CD4-positive, alpha-beta T cell (primary cell): ENCODE measurements at regions of chr9 and their contacts with region 1.

Region 1: GRCh38 chr9:112333639-112334431 is 416 bp upstream of the PTBP3 start:
- DNase-seq: peak; percentile 85 to 98 (median 94)
- ATAC-seq: peak; percentile 80
- H3K4me3 ChIP-seq: peak overlapping the region; percentile 88
- H3K4me3 Mint-ChIP-seq: peak overlapping the region; percentile 90
- H3K27ac ChIP-seq: peak overlapping the region; percentile 91 to 92
- H3K27ac Mint-ChIP-seq: peak overlapping the region; percentile 88
- H3K4me1 ChIP-seq: peaks cover 7% of the 10 kb centered on the region
- H3K4me1 Mint-ChIP-seq: peaks cover 35% of the 10 kb centered on the region
- H3K27me3 ChIP-seq: no peaks in the 10 kb centered on the region
- H3K27me3 Mint-ChIP-seq: no peaks in the 10 kb centered on the region
- CTCF ChIP-seq: peak; percentile 49

Region 2: GRCh38 chr9:111631071-111631971 is 702.5 kb before region 1 on chr9 and contains the start of gene DNAJC25:
- CTCF ChIA-PET with region 1: no interaction called
- POLR2A ChIA-PET with region 1: interaction called, 8 read pairs
- intact Hi-C with region 1: loop called in 1 of 2 experiments (anchors 5 kb)
- DNase-seq: peak; percentile 91 to 100 (median 96)
- ATAC-seq: peak; percentile 92
- H3K4me3 ChIP-seq: peak within 1 kb of the TSS; percentile 74
- H3K4me3 Mint-ChIP-seq: peak within 1 kb of the TSS; percentile 99
- H3K27ac ChIP-seq: peak within 1 kb of the TSS; percentile 3 to 75
- H3K27ac Mint-ChIP-seq: peak within 1 kb of the TSS; percentile 90
- H3K4me1 ChIP-seq: peaks cover 18% of the 10 kb centered on the region
- H3K4me1 Mint-ChIP-seq: peaks cover 58% of the 10 kb centered on the region
- H3K27me3 ChIP-seq: no peaks in the 10 kb centered on the region
- H3K27me3 Mint-ChIP-seq: no peaks in the 10 kb centered on the region
- CTCF ChIP-seq: no peak
- total RNA-seq, gene DNAJC25: 4.5 to 4.8 TPM

Region 3: DNA sequence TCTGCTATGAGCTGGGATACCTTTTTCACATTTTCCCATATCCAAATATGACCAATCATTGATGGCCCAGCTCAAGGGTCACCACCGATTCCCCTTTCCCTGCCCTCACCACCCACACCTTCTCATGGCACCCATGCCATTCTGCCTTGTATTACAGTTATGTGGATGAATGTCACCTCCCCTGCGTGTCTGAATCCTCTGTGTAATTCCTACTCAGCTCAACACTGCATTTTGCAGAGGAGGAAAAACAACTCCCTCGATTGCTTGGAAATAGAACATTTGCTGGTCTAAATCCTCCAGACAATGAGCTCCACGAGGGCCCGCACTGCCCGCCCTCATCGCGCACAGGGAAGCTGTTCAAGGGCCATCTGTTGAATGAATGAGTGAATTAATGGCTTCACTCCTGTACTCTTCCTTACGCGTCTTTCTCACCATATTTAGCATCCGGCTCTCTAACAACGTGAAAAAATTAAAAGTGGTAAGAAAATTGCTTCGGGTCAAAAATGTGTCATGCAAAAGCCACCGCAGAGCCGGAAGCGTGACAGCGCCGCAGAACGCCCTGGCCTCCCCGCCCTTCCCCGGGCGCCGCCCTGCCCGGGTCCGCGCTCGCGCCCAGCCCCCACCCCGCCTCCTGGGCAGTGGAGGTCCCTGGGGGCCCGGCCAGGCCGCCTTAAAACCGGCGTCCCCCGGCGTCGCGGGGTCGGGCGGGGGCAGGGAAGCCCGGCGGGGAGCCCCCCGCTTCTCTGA is 159.4 kb before region 1 on chr9:
- CTCF ChIA-PET with region 1: interaction called, 3 read pairs
- POLR2A ChIA-PET with region 1: interaction called, 33 read pairs
- intact Hi-C with region 1: loop called (anchors 1 to 5 kb)
- DNase-seq: peak; percentile 44 to 92 (median 66)
- ATAC-seq: peak; percentile 66
- H3K4me3 ChIP-seq: peak overlapping the region; percentile 56
- H3K4me3 Mint-ChIP-seq: peak overlapping the region; percentile 89
- H3K27ac ChIP-seq: no peak overlapping the region
- H3K27ac Mint-ChIP-seq: peak overlapping the region; percentile 81
- H3K4me1 ChIP-seq: peaks cover 70% of the 10 kb centered on the region
- H3K4me1 Mint-ChIP-seq: peaks cover 79% of the 10 kb centered on the region
- H3K27me3 ChIP-seq: no peaks in the 10 kb centered on the region
- H3K27me3 Mint-ChIP-seq: no peaks in the 10 kb centered on the region
- CTCF ChIP-seq: no peak

Region 4: DNA sequence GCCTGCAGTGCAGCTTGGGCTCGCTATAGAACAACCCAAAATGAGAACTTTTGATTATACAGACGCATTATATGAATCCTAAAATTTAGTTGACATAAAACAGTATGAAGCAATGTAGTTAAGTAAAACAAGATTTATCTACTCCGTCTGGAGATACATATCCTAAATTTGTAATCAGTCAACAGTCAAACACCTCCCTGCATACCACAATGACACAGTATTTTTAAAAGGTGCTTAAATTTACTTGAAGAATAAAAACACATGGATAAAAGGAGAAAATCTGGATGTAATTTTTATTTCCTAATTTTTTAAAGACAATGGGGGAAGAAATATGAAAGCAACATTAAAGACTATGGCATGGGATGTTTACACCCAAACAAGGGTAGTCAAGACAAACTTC is 71.3 kb before region 1 on chr9:
- CTCF ChIA-PET with region 1: no interaction called
- POLR2A ChIA-PET with region 1: no interaction called
- intact Hi-C with region 1: no loop called
- DNase-seq: no peak
- ATAC-seq: no peak
- H3K4me3 ChIP-seq: no peak overlapping the region
- H3K4me3 Mint-ChIP-seq: no peak overlapping the region
- H3K27ac ChIP-seq: no peak overlapping the region
- H3K27ac Mint-ChIP-seq: no peak overlapping the region
- H3K4me1 ChIP-seq: no peaks in the 10 kb centered on the region
- H3K4me1 Mint-ChIP-seq: peaks cover 34% of the 10 kb centered on the region
- H3K27me3 ChIP-seq: no peaks in the 10 kb centered on the region
- H3K27me3 Mint-ChIP-seq: no peaks in the 10 kb centered on the region
- CTCF ChIP-seq: no peak

Region 5: DNA sequence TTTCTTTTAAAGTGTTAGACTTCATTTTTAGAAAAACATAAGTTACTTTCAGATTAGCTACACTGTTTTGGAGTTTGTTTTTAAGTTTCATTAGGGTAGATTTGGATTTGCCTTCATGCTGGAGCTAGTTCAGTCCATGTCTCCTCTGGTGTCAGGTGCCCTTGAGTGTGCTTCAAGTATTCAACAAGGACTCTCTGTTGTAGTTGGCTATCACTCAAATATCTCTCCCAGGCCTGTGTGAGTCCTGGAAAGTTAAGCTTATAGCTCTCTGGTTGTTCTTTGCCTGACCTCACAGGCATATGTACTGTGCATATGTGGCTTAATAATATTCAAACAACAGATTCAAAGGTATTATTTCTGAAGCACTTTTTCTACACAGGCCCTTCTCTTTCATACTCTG is 45.8 kb before region 1 on chr9:
- CTCF ChIA-PET with region 1: no interaction called
- POLR2A ChIA-PET with region 1: no interaction called
- intact Hi-C with region 1: no loop called
- DNase-seq: no peak
- ATAC-seq: no peak
- H3K4me3 ChIP-seq: no peak overlapping the region
- H3K4me3 Mint-ChIP-seq: no peak overlapping the region
- H3K27ac ChIP-seq: no peak overlapping the region
- H3K27ac Mint-ChIP-seq: no peak overlapping the region
- H3K4me1 ChIP-seq: no peaks in the 10 kb centered on the region
- H3K4me1 Mint-ChIP-seq: peaks cover 46% of the 10 kb centered on the region
- H3K27me3 ChIP-seq: no peaks in the 10 kb centered on the region
- H3K27me3 Mint-ChIP-seq: no peaks in the 10 kb centered on the region
- CTCF ChIP-seq: no peak

Region 6: DNA sequence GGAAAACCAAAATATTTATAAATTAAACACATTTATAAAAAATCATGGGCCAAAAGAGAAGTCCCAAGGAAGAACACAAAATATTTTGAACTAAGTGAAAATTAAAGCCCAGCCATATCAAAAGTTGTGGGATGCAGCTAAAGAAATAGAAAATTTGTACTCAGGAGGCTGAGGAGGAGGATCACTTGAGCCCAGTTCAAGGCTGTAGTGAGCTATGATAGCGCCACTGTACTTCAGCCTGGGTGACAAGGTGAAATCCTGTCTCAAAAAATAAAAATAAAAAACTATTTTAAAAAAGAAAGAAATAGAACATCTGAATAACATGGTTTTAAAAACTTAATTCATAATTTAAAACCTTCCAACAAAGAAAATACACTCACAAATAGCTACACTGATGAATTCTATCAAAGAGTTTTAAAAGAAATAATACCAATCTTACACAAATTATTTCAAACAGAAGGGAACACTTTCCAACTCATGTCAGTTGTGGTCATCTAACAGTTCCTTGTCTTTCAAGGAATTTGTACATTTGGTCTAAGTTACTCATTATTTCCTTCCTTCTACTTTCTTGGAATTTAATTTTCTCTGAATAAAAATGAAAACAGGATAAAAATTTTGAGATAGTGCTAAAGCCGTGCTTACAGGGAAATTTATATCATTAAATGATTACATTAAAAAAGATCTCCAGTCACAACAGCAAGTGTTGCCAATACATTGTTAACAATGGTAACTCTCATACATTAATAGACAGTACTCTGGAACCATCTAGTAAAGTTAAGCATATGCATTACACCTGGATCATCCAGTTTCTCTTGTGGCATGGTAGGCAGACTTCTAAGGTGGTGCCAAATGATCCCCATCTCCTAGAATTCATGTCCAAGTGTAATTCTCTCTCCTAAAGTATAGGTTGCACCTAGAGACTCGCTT is 18.2 kb before region 1 on chr9:
- CTCF ChIA-PET with region 1: interaction called, 3 read pairs
- POLR2A ChIA-PET with region 1: interaction called, 50 read pairs
- intact Hi-C with region 1: loop called in 1 of 2 experiments (anchors 2 kb)
- DNase-seq: no peak
- ATAC-seq: no peak
- H3K4me3 ChIP-seq: no peak overlapping the region
- H3K4me3 Mint-ChIP-seq: peak overlapping the region; percentile 43
- H3K27ac ChIP-seq: no peak overlapping the region
- H3K27ac Mint-ChIP-seq: peak overlapping the region; percentile 8
- H3K4me1 ChIP-seq: peaks cover 46% of the 10 kb centered on the region
- H3K4me1 Mint-ChIP-seq: peaks cover 87% of the 10 kb centered on the region
- H3K27me3 ChIP-seq: no peaks in the 10 kb centered on the region
- H3K27me3 Mint-ChIP-seq: no peaks in the 10 kb centered on the region
- CTCF ChIP-seq: no peak

Region 7: DNA sequence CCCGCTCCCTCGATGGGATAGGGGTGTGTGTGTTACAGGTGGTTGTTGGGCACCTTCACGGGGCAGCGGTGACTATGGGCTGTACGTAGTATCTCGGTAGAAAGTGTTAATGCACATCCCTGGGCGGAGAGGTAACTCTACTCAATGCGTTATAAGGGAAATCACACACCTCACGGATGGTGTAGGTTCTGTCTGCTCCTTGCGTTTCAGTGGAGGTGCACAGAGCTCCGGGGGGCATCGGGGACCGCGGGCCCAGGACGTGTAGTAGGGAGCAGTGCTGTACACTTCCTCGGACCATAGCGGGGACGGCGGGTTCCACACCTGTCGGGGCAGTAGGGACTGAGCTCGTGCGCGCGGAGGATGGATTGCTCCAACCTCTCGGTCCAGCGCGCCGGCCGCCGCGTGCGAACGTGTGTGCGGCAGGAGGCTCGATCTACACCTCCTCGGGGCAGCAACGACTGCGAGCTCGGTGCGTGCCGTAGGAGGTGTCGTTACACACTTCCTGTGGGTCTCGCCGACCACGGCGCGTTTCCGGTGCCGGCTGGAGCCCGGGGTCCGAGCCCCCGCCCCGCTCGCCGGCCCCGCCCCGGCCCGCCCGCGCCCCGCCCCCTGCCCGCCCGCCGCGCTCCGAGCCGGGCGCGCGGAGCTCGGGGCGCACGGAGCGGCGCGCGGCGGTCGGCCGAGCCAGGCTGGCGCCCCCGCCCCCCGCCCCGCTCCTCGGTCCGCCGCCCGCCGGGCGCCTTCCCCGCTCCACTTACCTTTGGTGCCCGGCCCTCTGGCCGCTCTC is 152.6 kb after region 1 on chr9 and contains the start of gene KIAA1958:
- CTCF ChIA-PET with region 1: no interaction called
- POLR2A ChIA-PET with region 1: interaction called, 9 read pairs
- intact Hi-C with region 1: loop called in 1 of 2 experiments (anchors 5 kb)
- DNase-seq: peak; percentile 54 to 92 (median 76)
- ATAC-seq: peak; percentile 72
- H3K4me3 ChIP-seq: peak within 1 kb of the TSS; percentile 69
- H3K4me3 Mint-ChIP-seq: peak within 1 kb of the TSS; percentile 97
- H3K27ac ChIP-seq: peak within 1 kb of the TSS; percentile 44 to 62
- H3K27ac Mint-ChIP-seq: peak within 1 kb of the TSS; percentile 86
- H3K4me1 ChIP-seq: peaks cover 18% of the 10 kb centered on the region
- H3K4me1 Mint-ChIP-seq: peaks cover 45% of the 10 kb centered on the region
- H3K27me3 ChIP-seq: no peaks in the 10 kb centered on the region
- H3K27me3 Mint-ChIP-seq: no peaks in the 10 kb centered on the region
- CTCF ChIP-seq: no peak
- total RNA-seq, gene KIAA1958: 5.6 to 6.8 TPM